ENCODE measurements at regions of chr11 and their contacts with region 1.

Region 1: GRCh38 chr11:114262681-114263512 is 33.3 kb upstream of the NNMT start:
- DNase-seq: peak; percentile 44
- H3K4me3 Mint-ChIP-seq: no peak overlapping the region
- H3K27ac Mint-ChIP-seq: no peak overlapping the region
- H3K4me1 Mint-ChIP-seq: peaks cover 6% of the 10 kb centered on the region
- H3K27me3 Mint-ChIP-seq: peaks cover 16% of the 10 kb centered on the region

Region 2: DNA sequence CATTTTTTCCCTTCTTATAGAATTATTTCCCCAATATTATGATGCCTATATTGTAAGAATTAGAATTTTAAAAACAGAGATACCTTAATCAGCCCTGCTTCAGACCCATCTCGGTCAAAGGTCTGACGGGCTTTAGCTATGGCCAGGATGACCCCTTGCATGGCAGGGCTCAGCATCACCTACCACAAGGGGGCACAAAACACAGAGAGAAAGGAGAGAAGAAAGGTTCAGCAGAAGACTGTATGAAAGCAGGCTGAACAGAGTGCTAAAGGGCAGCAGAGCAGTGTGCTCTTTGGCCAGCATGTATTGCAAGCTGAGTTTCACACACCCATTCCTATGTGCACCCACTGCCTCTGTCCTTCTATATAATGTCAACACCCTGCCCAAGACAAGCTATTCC is 456.5 kb before region 1 on chr11:
- CTCF ChIA-PET with region 1: interaction called, 11 read pairs
- DNase-seq: peak; percentile 29
- H3K4me3 Mint-ChIP-seq: no peak overlapping the region
- H3K27ac Mint-ChIP-seq: peak overlapping the region; percentile 72
- H3K4me1 Mint-ChIP-seq: no peaks in the 10 kb centered on the region
- H3K27me3 Mint-ChIP-seq: no peaks in the 10 kb centered on the region

Region 3: GRCh38 chr11:113977071-113977490 is 285.8 kb before region 1 on chr11:
- CTCF ChIA-PET with region 1: interaction called, 16 read pairs
- DNase-seq: no peak
- H3K4me3 Mint-ChIP-seq: no peak overlapping the region
- H3K27ac Mint-ChIP-seq: no peak overlapping the region
- H3K4me1 Mint-ChIP-seq: no peaks in the 10 kb centered on the region
- H3K27me3 Mint-ChIP-seq: peaks cover 37% of the 10 kb centered on the region

Region 4: DNA sequence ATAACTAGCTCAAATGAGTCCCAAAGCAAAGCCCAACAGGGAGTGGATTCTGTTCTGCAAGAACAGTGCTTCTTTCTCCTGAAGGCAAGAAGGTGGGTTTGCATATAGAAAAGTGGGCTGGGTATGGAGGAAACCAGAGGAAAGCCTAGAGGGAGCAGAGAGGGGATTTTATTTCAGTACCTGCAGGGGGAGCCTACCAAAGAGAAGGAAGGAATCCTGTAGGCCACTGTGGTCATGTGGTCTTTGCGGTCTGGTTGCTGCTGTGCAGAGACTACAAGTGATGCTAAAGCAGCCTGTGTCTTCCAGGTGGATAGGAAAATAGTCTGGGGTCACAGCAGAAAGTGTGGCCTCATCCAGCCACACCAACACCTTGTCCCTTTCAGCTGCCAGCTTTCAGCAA is 236.5 kb before region 1 on chr11:
- CTCF ChIA-PET with region 1: interaction called, 87 read pairs
- DNase-seq: peak; percentile 72
- H3K4me3 Mint-ChIP-seq: no peak overlapping the region
- H3K27ac Mint-ChIP-seq: no peak overlapping the region
- H3K4me1 Mint-ChIP-seq: peaks cover 7% of the 10 kb centered on the region
- H3K27me3 Mint-ChIP-seq: peaks cover 45% of the 10 kb centered on the region

Region 5: GRCh38 chr11:114044042-114044871 is 218.6 kb before region 1 on chr11:
- CTCF ChIA-PET with region 1: interaction called, 114 read pairs
- DNase-seq: peak; percentile 26
- H3K4me3 Mint-ChIP-seq: no peak overlapping the region
- H3K27ac Mint-ChIP-seq: peak overlapping the region; percentile 38
- H3K4me1 Mint-ChIP-seq: peaks cover 27% of the 10 kb centered on the region
- H3K27me3 Mint-ChIP-seq: peaks cover 20% of the 10 kb centered on the region

Region 6: GRCh38 chr11:114180301-114181055 is 82.4 kb before region 1 on chr11:
- CTCF ChIA-PET with region 1: interaction called, 16 read pairs
- DNase-seq: peak; percentile 37
- H3K4me3 Mint-ChIP-seq: no peak overlapping the region
- H3K27ac Mint-ChIP-seq: no peak overlapping the region
- H3K4me1 Mint-ChIP-seq: peaks cover 83% of the 10 kb centered on the region
- H3K27me3 Mint-ChIP-seq: peaks cover 12% of the 10 kb centered on the region

Region 7: GRCh38 chr11:114250993-114251814 is 11.7 kb before region 1 on chr11:
- CTCF ChIA-PET with region 1: interaction called, 20 read pairs
- DNase-seq: no peak
- H3K4me3 Mint-ChIP-seq: no peak overlapping the region
- H3K27ac Mint-ChIP-seq: no peak overlapping the region
- H3K4me1 Mint-ChIP-seq: no peaks in the 10 kb centered on the region
- H3K27me3 Mint-ChIP-seq: peaks cover 15% of the 10 kb centered on the region

Region 8: DNA sequence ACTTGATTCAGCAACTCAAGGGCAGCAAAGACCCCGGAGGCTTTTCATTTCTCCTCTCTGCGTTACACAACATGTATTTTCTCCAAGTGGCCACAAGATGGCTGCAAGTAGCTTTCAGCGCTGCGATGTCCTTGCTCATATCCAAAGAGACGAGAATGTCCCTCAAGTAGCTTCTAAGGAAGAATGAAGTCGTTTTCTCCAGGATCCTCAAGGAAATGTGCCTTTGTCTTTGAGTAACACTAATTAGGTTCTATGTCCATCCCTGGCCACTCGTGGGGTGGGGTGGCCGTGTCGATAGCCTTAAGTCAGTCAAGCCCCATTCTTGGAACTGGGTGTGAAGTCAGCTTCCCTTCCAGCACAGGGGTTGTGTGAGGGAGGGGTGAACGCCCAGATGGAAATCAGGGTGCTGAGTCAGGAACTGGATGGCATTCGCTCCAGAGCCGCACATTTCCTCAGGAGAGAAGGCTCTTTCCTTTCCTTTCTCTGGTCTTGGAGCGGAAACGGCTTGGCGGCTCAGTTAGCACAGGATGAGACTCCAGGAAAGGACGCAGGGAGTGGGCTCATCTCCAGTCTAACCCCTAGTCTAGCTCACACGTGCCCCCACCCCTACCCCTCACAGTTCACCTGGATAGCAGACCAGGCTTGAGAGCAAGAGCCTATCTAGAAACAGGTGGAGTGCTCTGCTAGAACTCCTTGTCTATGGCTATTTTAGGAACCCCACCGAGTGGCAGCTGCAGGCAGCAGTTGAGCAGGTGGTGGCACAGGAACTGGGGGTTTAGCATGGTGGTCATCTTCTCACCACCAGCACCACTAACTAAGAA is 77.6 kb after region 1 on chr11:
- CTCF ChIA-PET with region 1: no interaction called
- DNase-seq: peak; percentile 42
- H3K4me3 Mint-ChIP-seq: peak overlapping the region; percentile 22
- H3K27ac Mint-ChIP-seq: no peak overlapping the region
- H3K4me1 Mint-ChIP-seq: peaks cover 13% of the 10 kb centered on the region
- H3K27me3 Mint-ChIP-seq: peaks cover 5% of the 10 kb centered on the region

Region 9: DNA sequence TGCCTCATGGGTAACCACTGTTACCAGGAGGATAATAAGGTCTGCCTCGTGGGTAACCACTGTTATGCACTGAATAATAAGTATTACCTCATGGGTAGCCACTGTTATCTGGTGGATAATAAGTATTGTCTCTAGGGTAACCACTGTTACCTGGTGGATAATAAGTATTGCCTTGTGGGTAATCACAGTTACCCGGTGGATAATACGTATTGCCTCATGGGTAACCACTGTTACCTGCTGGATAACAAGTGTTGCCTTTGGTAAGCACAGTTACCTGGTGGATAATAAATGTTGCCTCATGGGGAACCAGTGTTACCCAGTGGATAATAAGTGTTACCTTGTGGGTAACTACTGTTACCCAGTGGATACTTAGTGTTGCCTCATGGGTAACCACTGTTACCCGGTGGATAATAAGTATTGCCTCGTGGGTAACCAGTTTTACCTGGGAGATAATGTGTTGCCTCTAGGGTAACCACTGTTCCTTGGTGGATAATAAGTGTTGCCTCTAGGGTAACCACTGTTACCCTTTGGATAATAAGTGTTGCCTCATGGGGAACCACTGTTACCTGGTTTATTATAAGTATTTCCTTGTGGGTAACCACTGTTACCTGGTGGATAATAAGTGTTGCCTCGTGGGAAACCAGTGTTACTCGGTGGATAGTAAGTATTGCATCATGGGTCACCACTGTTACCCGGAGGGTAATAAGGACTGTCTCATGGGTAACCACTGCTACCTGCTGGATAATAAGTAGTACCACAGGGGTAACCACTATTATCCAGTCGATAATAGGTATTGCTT is 343.3 kb after region 1 on chr11:
- CTCF ChIA-PET with region 1: no interaction called
- DNase-seq: no peak
- H3K4me3 Mint-ChIP-seq: no peak overlapping the region
- H3K27ac Mint-ChIP-seq: no peak overlapping the region
- H3K4me1 Mint-ChIP-seq: no peaks in the 10 kb centered on the region
- H3K27me3 Mint-ChIP-seq: no peaks in the 10 kb centered on the region

Measured in activated naive CD4-positive, alpha-beta T cell treated with anti-CD3 and anti-CD28 coated beads, Interleukin-2, amount 10 ng/mL, durations not matched to agents 7 days and 5 days (primary cell).